ENCODE measurements at regions of chr12 and their contacts with region 1.

Region 1: GRCh38 chr12:26614020-26614616 is 218.9 kb downstream of the ITPR2 start:
- DNase-seq: peak; percentile 33
- ATAC-seq: no peak
- H3K4me3 Mint-ChIP-seq: no peak overlapping the region
- H3K27ac Mint-ChIP-seq: no peak overlapping the region
- H3K4me1 Mint-ChIP-seq: no peaks in the 10 kb centered on the region
- H3K27me3 Mint-ChIP-seq: no peaks in the 10 kb centered on the region
- CTCF ChIP-seq: peak; percentile 60

Region 2: DNA sequence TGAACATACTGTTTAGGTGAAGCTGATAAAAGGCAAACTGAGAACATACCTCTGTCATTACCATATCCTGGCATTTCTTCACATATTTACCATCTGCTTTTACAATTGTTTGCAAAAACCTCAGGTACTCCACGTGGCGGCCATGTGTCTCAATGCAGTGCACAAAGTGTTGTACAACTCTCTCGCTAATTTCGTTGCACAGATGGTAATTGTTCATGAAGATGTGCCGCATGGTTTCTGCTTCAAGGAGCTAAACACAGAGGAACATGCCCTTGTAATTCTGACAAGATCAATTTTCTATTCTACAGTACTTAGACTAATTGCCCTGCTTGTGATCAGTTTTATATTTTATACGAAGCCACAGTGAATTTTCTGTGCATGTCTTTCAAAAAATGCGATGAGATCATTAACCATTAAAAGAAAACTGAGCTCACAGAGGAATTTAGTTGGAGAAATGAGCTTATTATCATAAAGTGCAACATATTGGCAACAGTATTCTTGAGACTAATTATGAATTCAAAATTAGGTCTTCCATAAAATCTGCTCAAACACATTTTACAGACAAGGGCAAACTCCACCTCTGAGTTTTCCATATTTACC is 14.9 kb before region 1 on chr12:
- CTCF ChIA-PET with region 1: interaction called, 11 read pairs
- POLR2A ChIA-PET with region 1: no interaction called
- intact Hi-C with region 1: no loop called
- DNase-seq: no peak
- ATAC-seq: no peak
- H3K4me3 Mint-ChIP-seq: no peak overlapping the region
- H3K27ac Mint-ChIP-seq: no peak overlapping the region
- H3K4me1 Mint-ChIP-seq: no peaks in the 10 kb centered on the region
- H3K27me3 Mint-ChIP-seq: no peaks in the 10 kb centered on the region
- CTCF ChIP-seq: no peak

Region 3: DNA sequence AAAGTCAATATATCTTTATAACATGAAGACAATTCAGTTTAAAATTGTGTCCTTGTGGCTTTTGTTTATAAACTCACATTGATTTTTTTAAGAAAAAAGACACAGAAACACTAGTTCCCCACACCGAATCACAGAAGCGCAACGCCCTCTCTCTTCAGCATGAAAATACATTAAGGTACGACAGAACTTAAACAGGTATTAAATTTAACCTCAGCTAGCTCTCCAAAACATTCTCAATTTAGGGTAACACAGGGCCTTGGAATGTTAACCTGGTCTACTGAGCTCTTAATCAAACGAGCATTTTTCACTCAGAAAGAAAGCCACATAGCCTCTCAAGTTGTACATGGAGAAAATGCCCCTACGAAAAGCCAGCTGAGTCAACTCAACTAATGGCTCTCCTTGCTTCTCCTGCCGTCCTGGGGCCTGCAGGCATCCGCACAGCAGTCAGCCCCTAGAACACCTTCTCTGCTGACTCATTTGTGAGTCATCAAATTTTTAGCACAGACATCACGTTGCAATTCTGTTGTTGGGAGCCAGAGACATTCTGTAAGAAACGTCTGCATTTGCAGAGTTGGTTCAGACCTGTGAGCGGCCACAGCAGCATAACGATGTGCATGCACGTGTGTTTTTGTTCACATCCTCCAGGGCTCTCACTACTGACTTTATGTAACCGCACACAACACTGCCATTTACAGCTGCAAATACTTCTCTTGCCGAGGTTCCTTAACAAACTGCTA is 77.3 kb after region 1 on chr12:
- CTCF ChIA-PET with region 1: no interaction called
- POLR2A ChIA-PET with region 1: no interaction called
- intact Hi-C with region 1: no loop called
- DNase-seq: no peak
- ATAC-seq: no peak
- H3K4me3 Mint-ChIP-seq: no peak overlapping the region
- H3K27ac Mint-ChIP-seq: no peak overlapping the region
- H3K4me1 Mint-ChIP-seq: no peaks in the 10 kb centered on the region
- H3K27me3 Mint-ChIP-seq: no peaks in the 10 kb centered on the region
- CTCF ChIP-seq: no peak